HCT116 (cell line): ENCODE measurements at regions of chr18 and their contacts with region 1.

Region 1: GRCh38 chr18:9951022-9951859 is 37.4 kb downstream of the VAPA start:
- DNase-seq: peak; percentile 55
- ATAC-seq: peak; percentile 96
- H3K4me3 ChIP-seq: no peak overlapping the region
- H3K27ac ChIP-seq: peak overlapping the region; percentile 18; the same call in 1 of the 2 replicates
- H3K4me1 ChIP-seq: no peaks in the 10 kb centered on the region
- H3K27me3 ChIP-seq: no peaks in the 10 kb centered on the region
- CTCF ChIP-seq: peak; percentile 31 to 82 (median 75); a peak in 4 of 6 replicates
- POLR2A ChIP-seq: no peak
- RAD21 ChIP-seq: peak; percentile 72

Region 2: GRCh38 chr18:8969639-8970390 is 981.4 kb before region 1 on chr18:
- CTCF ChIA-PET with region 1: no interaction called
- POLR2A ChIA-PET with region 1: no interaction called
- RAD21 ChIA-PET with region 1: no interaction called
- intact Hi-C with region 1: no loop called
- DNase-seq: no peak
- ATAC-seq: no peak
- H3K4me3 ChIP-seq: no peak overlapping the region
- H3K27ac ChIP-seq: no peak overlapping the region
- H3K4me1 ChIP-seq: no peaks in the 10 kb centered on the region
- H3K27me3 ChIP-seq: no peaks in the 10 kb centered on the region
- CTCF ChIP-seq: no peak
- POLR2A ChIP-seq: no peak
- RAD21 ChIP-seq: no peak

Region 3: DNA sequence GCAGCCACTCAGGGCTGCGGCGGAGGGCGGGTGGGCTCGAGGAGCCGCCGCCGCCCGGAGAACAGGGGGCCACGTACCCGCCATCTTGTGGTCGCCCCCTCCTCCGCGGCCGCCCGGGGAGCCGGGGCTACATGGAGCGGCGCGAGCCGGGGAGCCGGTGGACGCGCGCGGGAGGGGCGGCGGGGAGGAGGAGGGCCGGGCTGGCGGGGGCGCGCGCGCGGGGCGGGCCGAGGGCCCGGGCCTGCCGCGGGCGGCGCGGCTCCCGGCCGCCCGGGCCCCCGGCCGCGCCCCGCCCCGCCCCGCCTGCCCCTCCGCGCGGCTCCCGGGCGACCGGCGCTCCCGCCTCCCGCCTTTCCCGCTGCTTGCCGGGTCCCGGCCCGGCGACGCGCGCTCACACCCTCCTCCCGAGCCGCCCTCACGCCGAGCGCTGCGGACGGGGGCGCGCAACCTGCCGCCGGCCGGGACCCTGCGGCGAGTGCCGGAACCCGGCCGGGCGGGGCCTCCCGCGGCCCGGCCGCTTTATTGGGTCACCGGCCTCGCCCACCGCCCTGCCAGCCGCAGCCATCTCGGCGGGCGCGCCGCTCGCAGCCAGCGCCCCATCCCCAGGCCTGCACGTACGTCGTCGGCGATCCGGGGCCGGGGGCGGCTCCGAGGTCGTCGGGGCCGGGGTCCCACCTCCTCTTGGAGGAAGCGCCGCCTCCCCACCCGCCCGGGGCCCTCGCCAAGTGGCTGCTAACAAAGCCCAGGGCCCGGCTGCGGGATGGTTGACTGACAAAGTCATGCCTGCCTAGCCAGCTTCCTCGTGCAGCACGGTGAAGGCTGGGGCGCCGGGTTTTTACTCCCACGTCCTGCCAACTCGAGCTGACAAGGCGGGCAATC is 336.6 kb before region 1 on chr18 and contains the start of gene PPP4R1:
- CTCF ChIA-PET with region 1: no interaction called
- POLR2A ChIA-PET with region 1: no interaction called
- RAD21 ChIA-PET with region 1: no interaction called
- intact Hi-C with region 1: loop called (anchors 10 kb)
- DNase-seq: no peak
- ATAC-seq: peak; percentile 76
- H3K4me3 ChIP-seq: peak within 1 kb of the TSS; percentile 78 to 87
- H3K27ac ChIP-seq: peak within 1 kb of the TSS; percentile 85
- H3K4me1 ChIP-seq: peaks cover 18 to 41% of the 10 kb centered on the region in 2 experiments
- H3K27me3 ChIP-seq: no peaks in the 10 kb centered on the region
- CTCF ChIP-seq: no peak
- POLR2A ChIP-seq: peak; percentile 43
- RAD21 ChIP-seq: no peak
- total RNA-seq, gene PPP4R1: 66.7 TPM

Region 4: DNA sequence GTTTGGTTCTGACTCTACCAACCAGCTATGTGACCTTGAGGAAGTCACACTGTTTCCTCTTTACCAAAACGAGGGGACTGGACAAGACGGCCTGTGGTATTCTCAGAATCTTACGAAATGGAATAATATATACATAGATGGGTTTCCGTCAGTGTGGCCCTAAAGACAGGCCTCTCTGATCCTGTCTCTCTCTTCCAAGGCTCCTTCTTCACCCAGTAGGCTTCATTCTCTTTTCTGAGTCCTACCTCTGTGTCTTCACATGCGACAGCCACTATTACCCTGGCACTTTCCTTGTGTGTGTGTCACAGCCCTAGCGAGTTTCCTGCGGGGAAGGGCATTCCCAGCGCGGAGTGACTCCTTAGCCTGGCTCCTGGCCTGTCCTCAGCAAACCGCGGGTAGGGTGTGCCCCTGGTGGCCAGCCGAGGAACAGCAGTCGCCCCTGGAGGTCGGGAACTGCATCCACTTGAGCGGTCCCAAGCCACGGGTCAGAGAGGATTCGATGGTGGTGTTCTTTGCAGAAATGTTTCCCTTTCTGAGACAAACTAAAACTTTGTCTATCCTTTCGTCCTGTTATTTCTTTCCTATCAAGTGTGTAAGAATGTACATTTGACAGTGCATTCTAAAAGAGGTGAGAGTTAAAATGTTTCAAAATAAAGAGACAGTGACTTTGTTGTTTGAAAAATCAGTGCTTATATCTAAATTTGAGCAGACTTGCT is 179.8 kb before region 1 on chr18:
- CTCF ChIA-PET with region 1: no interaction called
- POLR2A ChIA-PET with region 1: no interaction called
- RAD21 ChIA-PET with region 1: no interaction called
- intact Hi-C with region 1: loop called (anchors 5 kb)
- DNase-seq: peak; percentile 56
- ATAC-seq: peak; percentile 99
- H3K4me3 ChIP-seq: 0 out of 4 replicates have a peak overlapping the region, but pooled peaks of 1 of the 2 experiments have one; percentile 4
- H3K27ac ChIP-seq: no peak overlapping the region
- H3K4me1 ChIP-seq: peaks cover 0 to 20% of the 10 kb centered on the region in 2 experiments; a peak in 3 of 4 replicates
- H3K27me3 ChIP-seq: no peaks in the 10 kb centered on the region
- CTCF ChIP-seq: peak; percentile 69 to 99 (median 96)
- POLR2A ChIP-seq: no peak
- RAD21 ChIP-seq: peak; percentile 90

Region 5: DNA sequence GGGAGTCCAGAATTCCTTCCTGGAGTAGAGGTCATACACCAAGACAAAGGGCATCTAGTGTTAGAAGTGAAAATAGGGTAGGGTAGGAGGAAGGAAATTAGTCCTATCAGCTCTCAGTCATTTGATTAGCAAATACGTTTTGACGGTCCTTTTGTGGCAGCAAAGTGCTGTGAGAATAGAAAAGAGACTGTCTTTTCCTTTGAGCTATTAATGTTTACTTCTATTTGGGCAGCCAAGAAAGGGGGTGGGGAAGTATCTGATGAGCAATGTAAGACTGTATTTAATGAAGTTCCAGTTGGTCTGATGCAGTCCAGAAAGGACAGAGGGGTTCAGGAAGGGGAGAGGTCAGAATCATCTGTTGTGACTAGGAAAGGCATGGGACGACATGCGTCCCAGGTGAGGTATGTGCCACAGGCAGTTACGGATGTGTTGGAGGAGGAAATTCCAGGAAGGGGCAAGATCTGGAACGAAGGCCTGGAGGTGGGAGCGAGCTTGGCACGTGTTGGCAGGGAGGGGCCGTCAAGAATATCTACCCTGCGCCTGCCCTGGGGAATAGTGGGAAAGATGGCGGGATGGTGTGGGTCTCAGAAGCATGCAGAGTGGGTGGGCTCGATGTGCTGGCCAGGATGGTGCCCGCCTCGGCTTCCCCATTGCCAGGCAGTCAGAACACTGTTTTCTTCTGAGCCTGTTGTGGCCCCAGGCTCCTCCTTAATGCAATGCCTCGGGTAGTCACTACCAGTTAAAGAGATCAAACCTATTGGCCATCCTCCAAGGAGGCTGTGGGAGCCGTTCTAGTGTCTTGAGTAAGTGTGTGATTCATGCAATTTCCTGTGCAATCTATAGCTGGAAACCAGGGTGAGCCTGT is 123.4 kb before region 1 on chr18:
- CTCF ChIA-PET with region 1: no interaction called
- POLR2A ChIA-PET with region 1: no interaction called
- RAD21 ChIA-PET with region 1: no interaction called
- intact Hi-C with region 1: loop called (anchors 10 kb)
- DNase-seq: peak; percentile 97
- ATAC-seq: peak; percentile 81
- H3K4me3 ChIP-seq: peak overlapping the region in 1 of 2 experiments; percentile 42; a peak in 3 of 4 replicates
- H3K27ac ChIP-seq: peak overlapping the region; percentile 87
- H3K4me1 ChIP-seq: peaks cover 59 to 76% of the 10 kb centered on the region in 2 experiments
- H3K27me3 ChIP-seq: no peaks in the 10 kb centered on the region
- CTCF ChIP-seq: no peak
- POLR2A ChIP-seq: peak; percentile 31
- RAD21 ChIP-seq: no peak

Region 6: DNA sequence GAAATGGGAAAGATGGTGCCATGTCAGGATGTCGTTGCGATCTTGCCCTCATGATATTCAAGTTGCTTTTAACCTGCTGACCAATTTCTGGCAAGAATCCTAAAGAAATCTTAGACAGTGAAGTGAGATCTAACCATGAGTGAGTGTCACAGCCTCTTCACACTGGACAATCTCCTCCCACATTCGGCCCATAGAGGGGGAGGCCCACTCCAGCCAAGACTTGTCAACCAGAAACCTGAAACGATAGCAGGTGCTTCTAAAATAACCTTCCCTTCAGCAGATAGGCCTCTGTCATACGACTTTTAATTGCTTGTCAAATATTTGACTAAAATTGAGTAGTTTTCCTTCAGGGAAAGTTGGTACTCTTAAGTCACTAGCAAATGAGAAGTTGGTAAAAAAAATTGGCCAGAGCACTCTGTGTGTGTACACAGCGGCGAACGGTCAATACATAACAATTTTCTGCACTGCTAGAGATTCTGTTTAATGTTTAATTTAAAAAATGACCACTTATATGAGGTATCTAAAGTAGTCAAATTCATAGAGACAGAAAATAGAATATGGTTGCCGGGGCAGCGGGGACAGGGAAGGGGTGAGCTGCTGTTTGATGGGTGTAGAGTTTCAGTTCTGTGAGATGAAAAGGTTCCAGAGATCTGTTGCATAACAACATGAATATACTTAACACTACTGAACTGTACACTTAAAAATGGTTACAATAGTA is 72.8 kb after region 1 on chr18:
- CTCF ChIA-PET with region 1: no interaction called
- POLR2A ChIA-PET with region 1: no interaction called
- RAD21 ChIA-PET with region 1: no interaction called
- intact Hi-C with region 1: no loop called
- DNase-seq: no peak
- ATAC-seq: no peak
- H3K4me3 ChIP-seq: no peak overlapping the region
- H3K27ac ChIP-seq: no peak overlapping the region
- H3K4me1 ChIP-seq: no peaks in the 10 kb centered on the region
- H3K27me3 ChIP-seq: no peaks in the 10 kb centered on the region
- CTCF ChIP-seq: no peak
- POLR2A ChIP-seq: no peak
- RAD21 ChIP-seq: no peak

Region 7: GRCh38 chr18:10140461-10141282 is 189.4 kb after region 1 on chr18:
- CTCF ChIA-PET with region 1: no interaction called
- POLR2A ChIA-PET with region 1: no interaction called
- RAD21 ChIA-PET with region 1: no interaction called
- intact Hi-C with region 1: no loop called
- DNase-seq: no peak
- ATAC-seq: peak; percentile 14; the same call in 1 of the 2 replicates
- H3K4me3 ChIP-seq: no peak overlapping the region
- H3K27ac ChIP-seq: no peak overlapping the region
- H3K4me1 ChIP-seq: peaks cover 6 to 33% of the 10 kb centered on the region in 2 experiments
- H3K27me3 ChIP-seq: no peaks in the 10 kb centered on the region; the same call in 1 of the 2 replicates
- CTCF ChIP-seq: no peak
- POLR2A ChIP-seq: no peak
- RAD21 ChIP-seq: no peak